Activated CD8-positive, alpha-beta memory T cell treated with anti-CD3 and anti-CD28 coated beads, Interleukin-2, amount 10 ng/mL, durations not matched to agents 7 days and 5 days (primary cell): ENCODE measurements at regions of chr20 and their contacts with region 1.

Region 1: DNA sequence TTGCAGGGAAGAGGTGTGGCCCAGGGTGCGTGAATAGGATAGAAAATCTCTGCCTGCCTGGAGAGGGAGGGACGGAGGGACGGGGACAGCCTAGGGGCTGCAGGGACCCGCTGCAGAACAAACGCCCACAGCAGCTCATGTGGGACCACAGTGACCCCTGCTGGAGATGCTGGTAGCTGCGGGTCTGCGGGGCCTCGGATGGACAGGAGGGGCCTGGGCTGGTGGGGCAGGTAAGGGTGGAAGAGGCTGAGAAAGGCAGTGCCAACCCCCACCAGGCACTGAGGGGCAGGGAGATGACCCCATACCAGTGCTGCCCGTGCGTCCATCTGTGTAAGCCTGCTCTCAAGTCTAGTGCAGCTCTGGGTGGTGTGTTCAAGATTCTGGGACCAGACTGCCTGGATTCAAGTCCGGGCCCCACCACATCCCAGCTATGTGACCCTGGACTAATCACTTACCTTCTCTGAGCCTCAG is 39.4 kb downstream of the KIAA1755 start:
- DNase-seq: peak; percentile 74
- ATAC-seq: peak; percentile 81
- H3K4me3 Mint-ChIP-seq: no peak overlapping the region
- H3K27ac Mint-ChIP-seq: no peak overlapping the region
- H3K4me1 Mint-ChIP-seq: peaks cover 6% of the 10 kb centered on the region
- H3K27me3 Mint-ChIP-seq: peaks cover 8% of the 10 kb centered on the region

Region 2: GRCh38 chr20:37564388-37565133 is 656.6 kb before region 1 on chr20:
- CTCF ChIA-PET with region 1: interaction called, 10 read pairs
- DNase-seq: no peak
- ATAC-seq: peak; percentile 65
- H3K4me3 Mint-ChIP-seq: no peak overlapping the region
- H3K27ac Mint-ChIP-seq: no peak overlapping the region
- H3K4me1 Mint-ChIP-seq: no peaks in the 10 kb centered on the region
- H3K27me3 Mint-ChIP-seq: peaks cover 53% of the 10 kb centered on the region

Region 3: GRCh38 chr20:38050686-38051085 is 170.5 kb before region 1 on chr20:
- CTCF ChIA-PET with region 1: interaction called, 80 read pairs
- DNase-seq: no peak
- ATAC-seq: no peak
- H3K4me3 Mint-ChIP-seq: no peak overlapping the region
- H3K27ac Mint-ChIP-seq: no peak overlapping the region
- H3K4me1 Mint-ChIP-seq: peaks cover 21% of the 10 kb centered on the region
- H3K27me3 Mint-ChIP-seq: no peaks in the 10 kb centered on the region

Region 4: DNA sequence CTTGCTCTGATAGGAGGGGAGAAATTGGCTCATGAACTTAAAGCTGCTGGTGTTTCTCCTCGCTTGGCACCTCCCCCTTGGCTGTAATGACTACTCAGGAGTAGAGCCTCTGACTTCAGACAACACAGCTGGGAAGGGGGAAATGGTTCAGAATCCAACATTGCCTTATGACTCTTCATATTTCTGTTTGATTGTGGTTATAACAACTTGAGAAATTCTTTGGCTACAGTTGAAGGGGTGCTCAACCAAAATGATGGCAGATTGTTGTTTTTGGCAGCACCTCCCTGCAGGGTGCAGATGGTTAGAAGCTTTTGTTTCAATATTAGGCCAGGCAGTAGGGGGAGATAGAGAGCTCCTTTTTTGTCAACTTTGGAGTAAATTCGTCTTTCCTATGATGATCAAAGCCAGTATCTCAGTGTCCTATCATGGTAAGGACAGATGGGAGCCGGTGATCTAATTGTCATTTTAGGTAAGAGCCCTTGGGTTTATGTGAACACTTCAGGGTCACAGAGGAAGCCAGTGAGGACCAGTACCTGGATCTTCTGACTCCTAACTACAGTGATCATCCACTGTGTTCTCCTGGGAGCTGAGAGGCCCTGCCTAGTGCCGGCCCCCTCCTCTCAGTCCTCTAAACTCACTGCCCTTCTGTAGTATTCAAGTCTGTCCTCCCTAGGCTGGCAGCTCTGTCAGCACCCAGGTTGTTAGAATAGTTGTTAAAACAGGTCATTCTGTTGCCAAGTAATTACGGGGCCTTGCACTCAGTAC is 147.7 kb before region 1 on chr20:
- CTCF ChIA-PET with region 1: interaction called, 56 read pairs
- DNase-seq: no peak
- ATAC-seq: peak; percentile 55
- H3K4me3 Mint-ChIP-seq: no peak overlapping the region
- H3K27ac Mint-ChIP-seq: no peak overlapping the region
- H3K4me1 Mint-ChIP-seq: peaks cover 2% of the 10 kb centered on the region
- H3K27me3 Mint-ChIP-seq: no peaks in the 10 kb centered on the region

Region 5: DNA sequence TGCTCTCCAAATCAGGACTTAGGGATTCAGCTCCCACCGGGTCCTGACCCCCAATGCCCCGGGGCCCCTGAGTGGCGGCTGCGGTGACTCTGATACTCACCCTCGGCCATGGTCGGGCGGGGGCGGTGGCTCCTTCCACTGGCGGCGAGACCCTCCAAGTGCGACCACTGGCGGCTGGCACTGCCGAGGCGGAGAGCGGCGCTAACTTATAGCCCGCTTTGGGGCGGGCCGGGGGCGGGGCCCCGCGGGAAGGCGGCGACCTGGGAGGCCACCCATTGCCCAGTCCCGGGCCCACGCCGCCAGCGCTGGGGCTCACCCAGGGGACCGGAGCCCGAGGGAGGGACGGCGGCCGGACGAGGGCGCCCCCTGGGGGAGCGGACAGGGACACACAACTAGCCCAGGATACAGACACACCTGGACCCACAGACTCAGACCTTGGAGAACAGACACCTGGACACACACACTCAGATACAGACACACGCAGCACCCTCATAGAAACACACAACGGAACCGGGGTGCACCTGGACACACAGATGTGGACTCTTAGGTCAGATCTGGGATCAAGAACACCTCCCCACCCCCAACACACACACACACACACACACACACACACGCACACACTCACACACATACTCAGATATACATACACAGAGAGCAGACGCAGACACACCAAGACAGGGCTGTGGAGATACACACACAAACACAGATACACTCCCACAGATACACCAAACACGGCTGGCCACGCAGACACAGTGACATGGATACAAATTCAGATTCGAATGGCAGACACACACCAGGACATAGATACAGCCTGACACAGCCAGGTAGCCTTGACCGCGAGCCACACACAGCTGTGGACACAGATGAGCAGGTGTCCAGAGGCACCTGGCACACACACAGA is 55.8 kb before region 1 on chr20 and contains the start of gene TGM2:
- CTCF ChIA-PET with region 1: interaction called, 14 read pairs
- DNase-seq: peak; percentile 64
- ATAC-seq: peak; percentile 90
- H3K4me3 Mint-ChIP-seq: peak within 1 kb of the TSS; percentile 7
- H3K27ac Mint-ChIP-seq: no peak within 1 kb of the TSS
- H3K4me1 Mint-ChIP-seq: peaks cover 32% of the 10 kb centered on the region
- H3K27me3 Mint-ChIP-seq: peaks cover 24% of the 10 kb centered on the region
- total RNA-seq, gene TGM2: 0.35 TPM